GM12878 (cell line): ENCODE measurements at regions of chr11 and their contacts with region 1.

Region 1: DNA sequence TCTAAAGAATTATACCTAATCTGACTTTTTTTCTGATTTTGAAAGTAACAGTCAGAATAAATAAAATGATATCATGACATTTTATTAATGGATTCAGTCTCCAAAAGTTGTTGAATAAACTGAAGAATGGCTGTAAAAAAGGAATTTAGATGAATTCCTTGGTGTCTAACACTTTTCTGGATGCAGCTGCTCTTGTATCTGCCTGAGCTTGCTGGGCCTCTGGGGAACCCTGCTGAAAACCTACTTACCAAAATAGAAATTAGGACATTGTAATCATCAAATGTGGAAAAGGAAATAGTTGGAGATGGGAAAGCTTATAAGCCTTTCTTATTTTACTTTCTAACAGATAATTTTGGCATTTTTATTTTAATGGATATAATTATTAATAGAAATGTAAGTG is 315.7 kb upstream of the ANO5 start:
- DNase-seq: no peak
- ATAC-seq: no peak
- H3K4me3 ChIP-seq: no peak overlapping the region
- H3K27ac ChIP-seq: no peak overlapping the region
- H3K4me1 ChIP-seq: no peaks in the 10 kb centered on the region
- H3K27me3 ChIP-seq: no peaks in the 10 kb centered on the region
- CTCF ChIP-seq: no peak
- EP300 ChIP-seq: no peak
- POLR2A ChIP-seq: no peak
- RAD21 ChIP-seq: no peak

Region 2: GRCh38 chr11:21774212-21774611 is 102.9 kb before region 1 on chr11:
- CTCF ChIA-PET with region 1: no interaction called
- POLR2A ChIA-PET with region 1: no interaction called
- RAD21 ChIA-PET with region 1: no interaction called
- SMC1A ChIA-PET with region 1: no interaction called
- in situ Hi-C with region 1: no loop called
- intact Hi-C with region 1: no loop called
- DNase-seq: no peak
- ATAC-seq: no peak
- H3K4me3 ChIP-seq: no peak overlapping the region
- H3K27ac ChIP-seq: no peak overlapping the region
- H3K4me1 ChIP-seq: no peaks in the 10 kb centered on the region
- H3K27me3 ChIP-seq: no peaks in the 10 kb centered on the region
- CTCF ChIP-seq: no peak
- EP300 ChIP-seq: no peak
- POLR2A ChIP-seq: no peak
- RAD21 ChIP-seq: no peak

Region 3: GRCh38 chr11:21896746-21897602 is 19.8 kb after region 1 on chr11:
- CTCF ChIA-PET with region 1: no interaction called
- POLR2A ChIA-PET with region 1: no interaction called
- RAD21 ChIA-PET with region 1: interaction called, 3 read pairs
- SMC1A ChIA-PET with region 1: interaction called, 3 read pairs
- in situ Hi-C with region 1: no loop called
- intact Hi-C with region 1: loop called (anchors 2 kb)
- DNase-seq: no peak
- ATAC-seq: peak; percentile 34; the same call in 1 of the 3 replicates
- H3K4me3 ChIP-seq: no peak overlapping the region
- H3K27ac ChIP-seq: no peak overlapping the region
- H3K4me1 ChIP-seq: no peaks in the 10 kb centered on the region
- H3K27me3 ChIP-seq: no peaks in the 10 kb centered on the region
- CTCF ChIP-seq: no peak
- EP300 ChIP-seq: no peak
- POLR2A ChIP-seq: no peak
- RAD21 ChIP-seq: no peak